Heart left ventricle (tissue), 16 donors: ENCODE measurements at regions of chr12 and their contacts with region 1.

Region 1: GRCh38 chr12:113196996-113197395 is 11.5 kb downstream of the RITA1 start:
- DNase-seq: peak in 4 of 5 donors; percentile 65 to 76 (median 74)
- ATAC-seq: peak; percentile 85 to 89 (median 85)
- H3K4me3 ChIP-seq: no peak overlapping the region
- H3K27ac ChIP-seq: no peak overlapping the region
- H3K4me1 ChIP-seq: peaks cover 0 to 44% (median 16%) of the 10 kb centered on the region in 12 donors
- H3K27me3 ChIP-seq: no peaks in the 10 kb centered on the region
- CTCF ChIP-seq: peak; percentile 61 to 82 (median 73)
- POLR2A ChIP-seq: no peak

Region 2: DNA sequence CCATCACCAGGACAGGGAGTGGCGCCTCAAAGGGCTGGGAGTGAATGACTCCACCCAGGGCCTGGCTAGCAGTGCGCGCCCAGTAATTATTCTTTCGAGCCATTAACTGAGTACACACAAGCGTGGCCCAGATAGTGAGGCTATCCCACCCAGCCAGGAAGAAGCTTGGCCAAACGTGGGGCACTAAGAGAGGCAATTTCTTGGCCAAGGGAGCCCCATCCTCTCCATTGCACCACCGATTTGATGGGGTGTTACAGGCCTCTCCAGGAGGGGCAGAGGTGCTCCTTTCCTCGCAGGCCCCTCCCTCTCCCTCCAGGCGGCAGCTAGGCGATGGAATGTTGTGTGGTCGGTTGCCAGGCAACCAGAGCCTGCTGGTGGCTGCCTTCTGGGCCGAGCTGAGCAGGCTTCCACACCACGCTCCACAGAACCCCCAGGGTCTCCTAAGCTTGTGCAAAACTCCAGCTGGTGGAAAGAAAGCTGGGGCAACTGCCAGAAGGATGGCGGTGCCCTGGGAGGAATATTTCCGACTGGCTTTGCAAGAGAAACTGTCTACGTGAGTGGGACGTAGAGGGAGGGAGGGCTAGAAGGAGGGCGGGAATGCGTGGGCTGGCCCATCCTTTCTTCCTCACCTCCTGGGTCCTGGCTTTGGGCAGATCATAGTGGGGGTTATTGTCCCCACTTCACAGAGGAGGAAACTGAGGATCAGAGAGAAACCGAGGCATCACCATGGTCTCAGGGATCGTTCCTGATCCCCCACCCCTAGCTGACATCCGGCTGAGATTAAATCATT is 47.4 kb before region 1 on chr12 and contains the start of gene CFAP73:
- intact Hi-C with region 1: no loop called
- DNase-seq: peak; percentile 48 to 87 (median 71)
- ATAC-seq: peak; percentile 76 to 89 (median 87)
- H3K4me3 ChIP-seq: peak within 1 kb of the TSS in 1 of 12 donors; percentile 28
- H3K27ac ChIP-seq: no peak within 1 kb of the TSS
- H3K4me1 ChIP-seq: peaks cover 0 to 31% (median 12%) of the 10 kb centered on the region in 12 donors
- H3K27me3 ChIP-seq: peaks cover 6 to 47% (median 34%) of the 10 kb centered on the region in 9 donors
- CTCF ChIP-seq: no peak
- POLR2A ChIP-seq: no peak
- total RNA-seq, gene CFAP73: not detected

Region 3: GRCh38 chr12:113299619-113300237 is 102.7 kb after region 1 on chr12:
- intact Hi-C with region 1: loop called in 2 of 10 experiments (anchors 10 kb)
- DNase-seq: peak; percentile 57 to 86 (median 82)
- ATAC-seq: peak; percentile 17 to 75 (median 54)
- H3K4me3 ChIP-seq: no peak overlapping the region
- H3K27ac ChIP-seq: peak overlapping the region; percentile 70 to 91 (median 84)
- H3K4me1 ChIP-seq: peaks cover 0 to 53% (median 31%) of the 10 kb centered on the region in 12 donors
- H3K27me3 ChIP-seq: no peaks in the 10 kb centered on the region
- CTCF ChIP-seq: no peak
- POLR2A ChIP-seq: no peak

Region 4: DNA sequence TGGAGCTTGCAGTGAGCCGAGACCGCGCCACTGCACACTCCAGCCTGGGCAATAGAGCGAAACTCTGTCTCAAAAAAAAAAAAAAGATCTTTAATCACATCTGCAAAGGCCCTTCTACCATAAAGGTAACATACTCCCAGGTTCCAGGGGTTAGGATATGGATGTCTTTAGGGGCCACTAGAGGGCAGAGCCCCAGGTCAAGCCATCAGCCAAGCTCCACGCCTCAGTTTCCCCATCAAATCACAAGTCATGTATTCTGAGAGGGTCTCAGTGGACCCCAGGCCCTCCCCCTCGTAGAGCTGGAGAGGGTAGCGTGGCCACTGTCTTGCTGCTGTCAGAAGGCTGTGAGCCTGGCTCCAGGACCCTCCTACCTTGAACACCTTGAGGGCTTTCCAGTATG is 119.2 kb after region 1 on chr12:
- intact Hi-C with region 1: loop called in 2 of 10 experiments (anchors 5 to 10 kb)
- DNase-seq: no peak
- ATAC-seq: no peak
- H3K4me3 ChIP-seq: no peak overlapping the region
- H3K27ac ChIP-seq: no peak overlapping the region
- H3K4me1 ChIP-seq: peaks cover 0 to 4% (median 0%) of the 10 kb centered on the region in 12 donors
- H3K27me3 ChIP-seq: no peaks in the 10 kb centered on the region
- CTCF ChIP-seq: no peak
- POLR2A ChIP-seq: no peak

Region 5: GRCh38 chr12:113422030-113422885 is 225.3 kb after region 1 on chr12 and contains the start of gene SDSL:
- intact Hi-C with region 1: loop called in 9 of 10 experiments (anchors 5 to 10 kb)
- DNase-seq: peak; percentile 60 to 75 (median 71)
- ATAC-seq: peak; percentile 76 to 95 (median 94)
- H3K4me3 ChIP-seq: peak within 1 kb of the TSS in 11 of 12 donors; percentile 43 to 82 (median 58)
- H3K27ac ChIP-seq: peak within 1 kb of the TSS in 8 of 12 donors; percentile 58 to 93 (median 72)
- H3K4me1 ChIP-seq: peaks cover 0 to 28% (median 5%) of the 10 kb centered on the region in 12 donors
- H3K27me3 ChIP-seq: no peaks in the 10 kb centered on the region
- CTCF ChIP-seq: no peak
- POLR2A ChIP-seq: no peak
- total RNA-seq, gene SDSL: 2.6 to 21.0 (median 7.9) TPM